K562 (cell line): ENCODE measurements at regions of chr1 and their contacts with region 1.

Region 1: DNA sequence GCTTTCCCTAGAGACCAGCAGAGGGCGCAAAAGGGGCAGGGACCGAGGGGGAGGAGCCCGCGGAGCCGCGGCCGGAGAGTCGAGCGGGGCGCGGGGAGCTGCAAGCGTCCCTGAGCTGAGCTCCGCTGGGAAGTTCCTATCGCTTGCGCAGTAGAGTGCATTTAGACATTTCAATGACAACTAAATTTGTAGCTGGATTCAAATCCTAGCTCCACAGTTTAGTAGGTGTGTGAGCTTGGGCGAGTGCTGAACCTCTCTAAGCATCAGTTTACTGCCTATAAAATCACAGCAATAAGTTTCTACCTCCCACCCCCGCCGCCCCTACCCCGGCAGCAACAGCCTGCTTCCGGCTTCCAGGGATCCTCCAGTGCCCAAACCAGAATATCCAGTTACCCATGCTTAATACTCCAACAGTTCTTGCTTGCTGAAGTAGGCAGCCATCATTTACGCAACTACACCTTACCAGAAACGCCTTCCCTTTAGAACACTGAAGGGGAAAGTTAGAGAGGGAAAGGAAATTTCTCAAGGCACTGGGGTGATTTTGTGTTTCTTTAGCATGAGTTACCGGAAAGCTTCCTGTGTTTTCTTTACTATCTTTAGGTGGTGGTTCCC is 9.1 kb downstream of the TLR5 start:
- DNase-seq: peak; percentile 89 to 97 (median 95)
- ATAC-seq: peak; percentile 91
- H3K4me3 ChIP-seq: no peak overlapping the region
- H3K27ac ChIP-seq: no peak overlapping the region
- H3K4me1 ChIP-seq: peaks cover 0 to 11% of the 10 kb centered on the region in 2 experiments; a peak in 2 of 5 replicates
- H3K27me3 ChIP-seq: peaks cover 2 to 19% of the 10 kb centered on the region in 2 experiments; a peak in 2 of 5 replicates
- CTCF ChIP-seq: peak; percentile 92 to 96 (median 95); a peak in 5 of 6 replicates
- EP300 ChIP-seq: no peak
- POLR2A ChIP-seq: no peak
- RAD21 ChIP-seq: peak; percentile 90 to 93

Region 2: GRCh38 chr1:222792744-222793143 is 341.2 kb before region 1 on chr1:
- CTCF ChIA-PET with region 1: no interaction called
- POLR2A ChIA-PET with region 1: no interaction called
- in situ Hi-C with region 1: no loop called
- intact Hi-C with region 1: loop called (anchors 2 kb)
- DNase-seq: peak in 3 of 4 experiments; percentile 16 to 38 (median 29)
- ATAC-seq: peak; percentile 42; the same call in 1 of the 3 replicates
- H3K4me3 ChIP-seq: no peak overlapping the region
- H3K27ac ChIP-seq: no peak overlapping the region
- H3K4me1 ChIP-seq: no peaks in the 10 kb centered on the region
- H3K27me3 ChIP-seq: 0 out of 5 replicates have a peak, but pooled peaks cover 0 to 5% of the 10 kb centered on the region in 2 experiments
- CTCF ChIP-seq: peak in 2 of 3 experiments; percentile 33 to 64; a peak in 4 of 6 replicates
- EP300 ChIP-seq: no peak
- POLR2A ChIP-seq: no peak
- RAD21 ChIP-seq: peak; percentile 79 to 82

Region 3: GRCh38 chr1:223109581-223110026 is 24.3 kb before region 1 on chr1:
- CTCF ChIA-PET with region 1: no interaction called
- POLR2A ChIA-PET with region 1: no interaction called
- in situ Hi-C with region 1: no loop called
- intact Hi-C with region 1: no loop called
- DNase-seq: peak in 1 of 4 experiments; percentile 16
- ATAC-seq: no peak; the same call in 2 of the 3 replicates
- H3K4me3 ChIP-seq: no peak overlapping the region
- H3K27ac ChIP-seq: no peak overlapping the region
- H3K4me1 ChIP-seq: no peaks in the 10 kb centered on the region
- H3K27me3 ChIP-seq: peaks cover 31 to 42% of the 10 kb centered on the region in 2 experiments
- CTCF ChIP-seq: no peak
- EP300 ChIP-seq: no peak
- POLR2A ChIP-seq: no peak
- RAD21 ChIP-seq: no peak

Region 4: DNA sequence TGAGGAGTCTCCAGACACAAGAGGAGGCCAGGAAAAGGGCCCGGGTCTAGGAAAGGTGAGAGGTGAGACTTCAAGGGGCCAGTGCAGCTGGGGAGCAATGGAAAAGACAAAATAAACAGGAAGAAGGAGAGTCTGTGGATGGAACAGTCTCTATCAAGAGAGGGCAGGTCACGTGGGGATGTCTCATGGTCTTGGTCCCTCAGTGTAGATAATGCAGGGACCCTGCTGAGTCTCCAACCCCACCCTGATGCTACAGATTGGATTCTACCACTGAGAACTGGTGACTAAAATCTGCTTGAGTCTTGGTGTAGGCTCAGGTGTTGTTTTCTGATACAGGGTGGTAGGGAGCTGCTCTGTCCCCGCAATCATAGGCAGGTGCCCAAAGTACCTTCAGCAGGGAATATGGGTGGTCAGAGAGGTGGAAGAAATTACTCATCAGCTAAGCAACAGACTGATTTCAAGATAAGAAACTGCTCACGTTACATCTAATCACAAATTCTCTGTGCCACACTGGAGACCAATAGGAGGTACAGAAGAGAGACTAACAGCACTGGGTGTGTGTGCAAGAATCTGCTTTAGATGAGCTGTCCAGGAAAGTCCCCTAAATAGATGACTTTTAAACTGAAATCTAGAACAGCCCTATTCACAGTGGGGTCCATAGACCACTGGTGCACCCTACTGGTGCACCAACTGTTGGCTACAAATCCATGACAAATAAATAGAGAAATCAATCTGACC is 110.6 kb after region 1 on chr1:
- CTCF ChIA-PET with region 1: no interaction called
- POLR2A ChIA-PET with region 1: no interaction called
- in situ Hi-C with region 1: no loop called
- intact Hi-C with region 1: loop called (anchors 2 kb)
- DNase-seq: peak; percentile 31 to 75 (median 43)
- ATAC-seq: peak; percentile 60
- H3K4me3 ChIP-seq: no peak overlapping the region
- H3K27ac ChIP-seq: no peak overlapping the region; the same call in 2 of the 3 replicates
- H3K4me1 ChIP-seq: peaks cover 14 to 25% of the 10 kb centered on the region in 2 experiments
- H3K27me3 ChIP-seq: no peaks in the 10 kb centered on the region
- CTCF ChIP-seq: peak; percentile 45 to 74 (median 58); a peak in 4 of 6 replicates
- EP300 ChIP-seq: peak; percentile 31
- POLR2A ChIP-seq: no peak
- RAD21 ChIP-seq: peak; percentile 52 to 79

Region 5: DNA sequence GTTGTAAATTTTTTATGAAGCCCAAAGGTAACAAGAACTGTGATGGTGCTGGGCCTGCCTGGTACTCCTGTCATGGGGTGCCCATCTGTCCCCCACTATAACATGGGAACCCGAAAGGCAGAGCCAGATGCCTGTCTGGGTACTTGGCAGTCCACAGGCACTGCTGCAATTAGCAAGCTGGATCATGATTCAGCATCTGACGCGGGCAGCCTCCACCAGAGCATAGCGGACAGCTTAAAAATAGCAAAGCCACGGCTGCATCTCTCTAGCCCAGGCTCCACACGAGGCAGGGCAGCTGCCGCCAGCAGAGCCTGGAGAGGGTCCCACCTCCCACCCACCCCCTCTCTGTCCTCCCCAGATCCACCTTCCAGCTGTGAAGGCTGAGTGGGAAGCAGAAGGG is 207.2 kb after region 1 on chr1:
- CTCF ChIA-PET with region 1: no interaction called
- POLR2A ChIA-PET with region 1: no interaction called
- in situ Hi-C with region 1: no loop called
- intact Hi-C with region 1: loop called (anchors 10 kb)
- DNase-seq: no peak
- ATAC-seq: peak; percentile 54
- H3K4me3 ChIP-seq: no peak overlapping the region
- H3K27ac ChIP-seq: no peak overlapping the region
- H3K4me1 ChIP-seq: no peaks in the 10 kb centered on the region
- H3K27me3 ChIP-seq: peaks cover 25 to 59% of the 10 kb centered on the region in 2 experiments
- CTCF ChIP-seq: no peak
- EP300 ChIP-seq: no peak
- POLR2A ChIP-seq: no peak
- RAD21 ChIP-seq: no peak